AG04450 (cell line): ENCODE measurements at regions of chr11 and their contacts with region 1.

Region 1: DNA sequence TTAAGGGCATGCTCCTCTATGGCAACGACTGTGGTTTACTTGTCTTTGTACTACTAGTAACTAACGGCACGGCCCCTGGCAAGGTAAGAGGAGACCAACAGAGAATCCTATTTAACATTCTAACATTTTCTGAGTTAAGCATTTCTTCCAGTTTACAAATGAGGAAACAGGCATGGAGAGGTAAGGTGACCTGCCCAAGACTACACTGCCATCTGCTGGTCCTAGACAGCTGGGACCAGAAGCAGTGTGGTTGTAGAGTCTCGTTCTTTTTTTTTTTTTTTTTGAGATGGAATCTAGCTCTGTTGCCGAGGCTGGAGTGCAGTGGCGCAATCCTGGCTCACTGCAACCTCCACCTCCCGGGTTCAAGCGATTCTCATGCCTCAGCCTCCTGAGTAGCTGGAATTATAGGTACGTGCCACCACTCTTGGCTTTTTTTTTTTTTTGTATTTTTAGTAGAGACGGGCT is 5.3 kb upstream of the RAPSN start:
- DNase-seq: peak; percentile 72
- H3K4me3 ChIP-seq: no peak overlapping the region
- H3K27ac ChIP-seq: no peak overlapping the region
- H3K27me3 ChIP-seq: no peaks in the 10 kb centered on the region
- CTCF ChIP-seq: peak; percentile 87

Region 2: GRCh38 chr11:46404476-46405017 is 1049.7 kb before region 1 on chr11:
- CTCF ChIA-PET with region 1: no interaction called
- POLR2A ChIA-PET with region 1: interaction called, 11 read pairs
- DNase-seq: no peak
- H3K4me3 ChIP-seq: no peak overlapping the region
- H3K27ac ChIP-seq: no peak overlapping the region
- H3K27me3 ChIP-seq: no peaks in the 10 kb centered on the region
- CTCF ChIP-seq: no peak

Region 3: DNA sequence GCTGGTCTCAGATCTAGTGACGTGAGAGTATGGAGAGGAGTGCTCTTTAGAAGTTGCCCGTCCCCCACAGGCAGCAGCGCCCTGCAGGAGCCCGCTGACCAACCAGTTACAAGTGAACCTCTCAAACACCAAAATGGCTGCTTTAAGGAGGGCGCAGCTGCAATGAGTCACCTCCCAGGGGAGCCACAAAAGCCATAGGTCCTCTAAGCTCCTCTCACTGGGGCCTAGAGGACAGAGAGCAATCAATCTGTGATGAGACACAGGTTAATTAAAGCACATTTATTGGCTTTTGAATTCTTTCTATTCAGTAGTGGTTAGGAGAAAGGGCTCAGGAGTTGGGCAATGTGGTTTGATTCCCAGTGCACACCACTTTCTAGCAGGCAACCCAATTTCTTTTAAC is 10.3 kb after region 1 on chr11:
- CTCF ChIA-PET with region 1: interaction called, 30 read pairs
- POLR2A ChIA-PET with region 1: no interaction called
- DNase-seq: no peak
- H3K4me3 ChIP-seq: no peak overlapping the region
- H3K27ac ChIP-seq: no peak overlapping the region
- H3K27me3 ChIP-seq: no peaks in the 10 kb centered on the region
- CTCF ChIP-seq: no peak

Region 4: DNA sequence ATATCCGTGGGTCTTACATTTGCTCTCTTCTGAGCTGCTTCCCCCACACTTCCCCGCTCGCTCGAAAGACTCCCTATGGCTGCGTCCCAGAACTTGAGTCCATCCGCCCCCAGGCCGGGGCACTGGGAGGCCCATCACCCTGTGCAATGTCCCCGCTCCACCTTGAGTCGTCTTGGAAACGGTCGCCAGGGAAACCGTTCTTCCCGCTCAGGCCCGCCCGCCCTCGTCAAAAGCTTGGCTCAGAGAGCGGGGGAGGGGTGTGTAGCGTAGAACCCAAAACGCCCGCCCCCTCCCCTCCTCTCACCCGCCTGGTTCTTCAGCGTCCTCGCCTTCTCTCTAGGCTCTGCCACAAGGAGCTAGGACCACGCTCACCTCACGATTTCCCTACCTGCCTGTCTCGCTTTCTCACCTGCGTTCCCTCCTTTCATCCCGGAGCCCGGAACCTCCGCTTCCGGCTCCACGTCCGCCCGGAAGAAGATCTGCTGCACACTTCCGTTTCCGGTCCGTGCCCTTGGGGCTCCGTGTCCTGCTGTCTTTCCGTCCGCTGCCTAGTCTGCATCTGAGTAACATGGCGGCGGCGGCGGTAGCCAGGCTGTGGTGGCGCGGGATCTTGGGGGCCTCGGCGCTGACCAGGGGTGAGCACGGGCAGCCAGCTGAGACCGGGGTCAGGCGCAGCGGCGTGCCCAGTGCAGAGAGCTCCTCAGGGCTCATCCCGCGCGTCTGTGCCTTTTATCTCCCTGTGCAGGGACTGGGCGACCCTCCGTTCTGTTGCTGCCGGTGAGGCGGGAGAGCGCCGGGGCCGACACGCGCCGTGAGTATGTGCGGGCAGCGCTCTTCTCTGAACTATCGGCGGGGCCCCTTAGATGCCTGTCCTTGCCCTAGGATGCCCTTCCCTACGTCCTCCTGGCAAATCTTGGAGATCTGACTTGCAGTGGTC is 124.6 kb after region 1 on chr11 and contains the starts of genes KBTBD4 and NDUFS3:
- CTCF ChIA-PET with region 1: interaction called, 5 read pairs
- POLR2A ChIA-PET with region 1: interaction called, 14 read pairs
- DNase-seq: peak; percentile 73
- H3K4me3 ChIP-seq: peak within 1 kb of the TSS; percentile 95
- H3K27ac ChIP-seq: peak within 1 kb of the TSS; percentile 33
- H3K27me3 ChIP-seq: no peaks in the 10 kb centered on the region
- CTCF ChIP-seq: no peak
- polyA plus RNA-seq, gene KBTBD4: 19.5 and 20.0 TPM in 2 replicates
- polyA plus RNA-seq, gene NDUFS3: 103 and 106 TPM in 2 replicates